Activated CD4-positive, alpha-beta memory T cell treated with anti-CD3 and anti-CD28 coated beads for 36 hours (primary cell): ENCODE measurements at regions of chr20 and their contacts with region 1.

Region 1: GRCh38 chr20:5844063-5844681 is 94.0 kb downstream of the SHLD1 start:
- DNase-seq: peak; percentile 87
- H3K4me3 Mint-ChIP-seq: peak overlapping the region; percentile 53
- H3K27ac Mint-ChIP-seq: peak overlapping the region; percentile 79
- H3K4me1 Mint-ChIP-seq: peaks cover 67% of the 10 kb centered on the region
- H3K27me3 Mint-ChIP-seq: no peaks in the 10 kb centered on the region

Region 2: GRCh38 chr20:5078399-5078958 is 765.7 kb before region 1 on chr20:
- CTCF ChIA-PET with region 1: no interaction called
- POLR2A ChIA-PET with region 1: no interaction called
- intact Hi-C with region 1: no loop called
- DNase-seq: peak; percentile 92
- H3K4me3 Mint-ChIP-seq: peak overlapping the region; percentile 60
- H3K27ac Mint-ChIP-seq: peak overlapping the region; percentile 90
- H3K4me1 Mint-ChIP-seq: peaks cover 37% of the 10 kb centered on the region
- H3K27me3 Mint-ChIP-seq: no peaks in the 10 kb centered on the region

Region 3: GRCh38 chr20:5596401-5597193 is 247.6 kb before region 1 on chr20:
- CTCF ChIA-PET with region 1: no interaction called
- POLR2A ChIA-PET with region 1: no interaction called
- intact Hi-C with region 1: loop called (anchors 5 kb)
- DNase-seq: no peak
- H3K4me3 Mint-ChIP-seq: no peak overlapping the region
- H3K27ac Mint-ChIP-seq: peak overlapping the region; percentile 66
- H3K4me1 Mint-ChIP-seq: peaks cover 66% of the 10 kb centered on the region
- H3K27me3 Mint-ChIP-seq: no peaks in the 10 kb centered on the region

Region 4: GRCh38 chr20:5735845-5736525 is 108.2 kb before region 1 on chr20:
- CTCF ChIA-PET with region 1: no interaction called
- POLR2A ChIA-PET with region 1: no interaction called
- intact Hi-C with region 1: loop called (anchors 10 kb)
- DNase-seq: no peak
- H3K4me3 Mint-ChIP-seq: no peak overlapping the region
- H3K27ac Mint-ChIP-seq: peak overlapping the region; percentile 43
- H3K4me1 Mint-ChIP-seq: peaks cover 29% of the 10 kb centered on the region
- H3K27me3 Mint-ChIP-seq: no peaks in the 10 kb centered on the region

Region 5: GRCh38 chr20:5863040-5863833 is 19.1 kb after region 1 on chr20:
- CTCF ChIA-PET with region 1: no interaction called
- POLR2A ChIA-PET with region 1: no interaction called
- intact Hi-C with region 1: loop called (anchors 1 kb)
- DNase-seq: peak; percentile 29
- H3K4me3 Mint-ChIP-seq: no peak overlapping the region
- H3K27ac Mint-ChIP-seq: no peak overlapping the region
- H3K4me1 Mint-ChIP-seq: peaks cover 30% of the 10 kb centered on the region
- H3K27me3 Mint-ChIP-seq: no peaks in the 10 kb centered on the region

Region 6: GRCh38 chr20:5950271-5951031 is 106.3 kb after region 1 on chr20 and contains the starts of genes MCM8 and TRMT6:
- CTCF ChIA-PET with region 1: interaction called, 3 read pairs
- POLR2A ChIA-PET with region 1: interaction called, 7 read pairs
- intact Hi-C with region 1: loop called (anchors 1 kb)
- DNase-seq: peak; percentile 98
- H3K4me3 Mint-ChIP-seq: peak within 1 kb of the TSS; percentile 88
- H3K27ac Mint-ChIP-seq: peak within 1 kb of the TSS; percentile 95
- H3K4me1 Mint-ChIP-seq: peaks cover 58% of the 10 kb centered on the region
- H3K27me3 Mint-ChIP-seq: peaks cover 1% of the 10 kb centered on the region
- total RNA-seq, gene MCM8: 46.8 to 50.7 TPM
- total RNA-seq, gene TRMT6: 24.9 to 27.1 TPM